ENCODE measurements at regions of chr13 and their contacts with region 1.

Region 1: DNA sequence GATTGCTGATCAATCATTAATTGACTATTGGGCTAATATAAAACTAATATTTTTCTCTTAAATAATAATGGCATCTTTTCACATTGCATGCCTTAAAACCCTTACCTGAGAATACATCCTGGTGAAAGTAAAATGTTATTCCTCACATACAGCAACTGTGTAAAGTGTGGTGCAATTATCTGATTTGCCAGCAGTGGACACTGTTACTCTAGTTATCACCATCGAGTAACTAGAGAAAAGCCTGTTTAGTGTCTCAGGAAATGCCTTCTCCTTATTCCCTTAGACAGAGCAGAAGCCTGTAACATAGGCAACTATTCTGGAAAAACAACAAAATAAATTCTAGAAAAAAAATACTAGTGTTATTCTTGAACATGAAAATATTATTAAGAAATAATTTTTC is 459.8 kb downstream of the FGF14 start:
- DNase-seq: no peak
- ATAC-seq: peak; percentile 89

Region 2: GRCh38 chr13:102012299-102013293 is 70.6 kb after region 1 on chr13:
- intact Hi-C with region 1: loop called (anchors 5 kb)
- DNase-seq: peak; percentile 68
- ATAC-seq: peak; percentile 97

Region 3: GRCh38 chr13:102141625-102142472 is 199.8 kb after region 1 on chr13:
- intact Hi-C with region 1: loop called (anchors 5 kb)
- DNase-seq: no peak
- ATAC-seq: no peak

Region 4: DNA sequence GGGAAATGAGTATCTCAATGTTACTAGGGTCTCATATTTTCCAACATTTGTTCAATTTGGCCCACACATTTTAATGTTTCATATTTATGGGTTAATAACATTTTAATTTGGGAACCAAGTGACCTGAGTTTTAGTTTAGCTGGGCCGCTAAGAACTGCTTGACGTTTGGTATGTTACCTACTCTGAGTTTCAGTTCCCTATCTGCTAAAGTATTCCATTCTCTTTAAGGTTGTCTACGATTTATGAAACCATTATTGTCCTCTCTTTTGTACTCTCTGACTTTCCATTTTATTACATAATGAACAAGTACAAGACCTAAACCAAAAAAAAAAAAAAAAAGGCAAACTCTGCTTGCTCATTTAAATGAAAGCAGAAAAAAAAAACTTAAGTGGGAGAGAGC is 369.9 kb after region 1 on chr13:
- intact Hi-C with region 1: loop called (anchors 10 kb)
- DNase-seq: no peak
- ATAC-seq: no peak

Region 5: DNA sequence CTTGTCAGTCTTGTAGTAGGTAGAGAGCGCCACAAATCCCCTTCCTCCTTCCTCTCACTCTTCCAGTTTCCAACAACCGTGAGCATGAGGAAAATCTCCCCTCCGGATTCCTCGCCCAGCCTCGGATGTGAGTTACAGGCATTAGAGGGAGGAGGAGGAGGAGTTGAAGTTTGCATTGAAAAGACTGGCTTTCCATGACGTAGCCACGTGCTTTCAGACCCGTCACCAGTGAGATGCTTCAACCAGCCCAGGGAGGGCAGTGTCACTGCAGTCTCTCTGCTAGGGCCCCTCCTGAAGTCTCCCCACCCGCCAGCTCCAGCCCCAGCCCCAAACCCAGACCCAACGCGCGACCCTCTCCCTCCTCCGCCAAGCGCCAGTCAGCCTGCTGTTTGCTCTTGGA is 460.3 kb after region 1 on chr13:
- intact Hi-C with region 1: loop called (anchors 5 kb)
- DNase-seq: no peak
- ATAC-seq: peak; percentile 61

Region 6: GRCh38 chr13:102460801-102461200 is 518.8 kb after region 1 on chr13:
- intact Hi-C with region 1: loop called (anchors 1 kb)
- DNase-seq: no peak
- ATAC-seq: no peak

Region 7: GRCh38 chr13:102555917-102556553 is 614.0 kb after region 1 on chr13:
- intact Hi-C with region 1: loop called (anchors 5 kb)
- DNase-seq: no peak
- ATAC-seq: no peak